Esophagus muscularis mucosa (tissue), 4 donors: ENCODE measurements at regions of chr10 and their contacts with region 1.

Region 1: GRCh38 chr10:95363303-95363912 is 72.6 kb upstream of the PDLIM1 start:
- DNase-seq: no peak
- H3K4me3 ChIP-seq: no peak overlapping the region
- H3K27ac ChIP-seq: peak overlapping the region; percentile 7 to 70 (median 44)
- H3K4me1 ChIP-seq: peaks cover 37 to 95% (median 93%) of the 10 kb centered on the region in 4 donors
- H3K27me3 ChIP-seq: no peaks in the 10 kb centered on the region
- CTCF ChIP-seq: peak; percentile 77 to 84 (median 83)
- EP300 ChIP-seq: no peak
- POLR2A ChIP-seq: no peak

Region 2: DNA sequence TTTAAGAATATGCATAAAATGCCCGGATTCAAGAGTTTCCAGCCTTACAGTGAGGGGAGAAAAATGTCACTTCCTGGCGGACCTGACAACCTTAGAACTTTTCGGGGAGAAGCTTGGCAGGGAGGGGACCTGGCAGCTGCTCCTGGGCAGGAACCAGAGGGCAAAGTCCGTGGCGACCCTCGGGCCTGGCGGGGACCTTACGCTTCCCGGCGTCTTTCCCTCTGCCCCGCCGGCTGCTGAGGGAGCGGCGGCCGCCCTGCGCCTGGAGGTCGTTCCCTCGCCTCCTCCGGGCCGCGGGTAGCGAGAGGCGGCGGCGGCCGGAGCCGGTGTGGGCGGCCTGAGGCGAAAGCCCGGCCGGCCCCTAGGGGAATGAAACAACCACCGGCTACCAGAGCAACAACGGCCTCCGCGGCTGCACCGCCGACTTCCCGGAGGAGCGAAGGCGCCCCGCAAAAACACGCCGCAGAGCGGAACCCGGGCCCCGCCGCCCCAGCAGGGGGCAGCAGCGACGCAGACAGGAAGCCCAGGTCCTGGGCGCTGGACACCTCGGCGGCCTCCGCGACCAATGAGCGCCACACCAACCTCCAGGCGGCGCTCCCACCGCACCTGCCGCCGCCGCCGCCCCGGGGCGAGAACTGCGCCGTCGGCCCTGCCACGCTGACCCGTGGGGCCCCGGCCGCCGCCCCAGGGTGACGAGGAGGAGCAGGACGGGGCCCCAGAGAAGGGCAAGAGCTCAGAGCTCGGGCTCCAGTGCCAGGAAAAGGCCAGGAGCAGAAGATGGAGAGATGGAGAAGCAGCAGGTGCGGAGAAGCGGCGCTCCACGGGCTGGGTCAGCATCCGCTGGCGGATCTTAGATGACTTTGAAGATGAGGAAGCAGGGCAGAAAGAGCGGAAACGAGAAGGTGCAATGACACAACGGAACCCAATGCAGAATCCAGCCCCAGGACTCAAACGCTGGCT is 179.9 kb before region 1 on chr10:
- intact Hi-C with region 1: loop called (anchors 10 kb)
- DNase-seq: no peak
- H3K4me3 ChIP-seq: peak overlapping the region; percentile 64 to 71 (median 68)
- H3K27ac ChIP-seq: peak overlapping the region; percentile 74 to 86 (median 84)
- H3K4me1 ChIP-seq: peaks cover 0 to 14% (median 9%) of the 10 kb centered on the region in 4 donors
- H3K27me3 ChIP-seq: no peaks in the 10 kb centered on the region
- CTCF ChIP-seq: peak; percentile 89 to 98 (median 92)
- EP300 ChIP-seq: no peak
- POLR2A ChIP-seq: no peak

Region 3: DNA sequence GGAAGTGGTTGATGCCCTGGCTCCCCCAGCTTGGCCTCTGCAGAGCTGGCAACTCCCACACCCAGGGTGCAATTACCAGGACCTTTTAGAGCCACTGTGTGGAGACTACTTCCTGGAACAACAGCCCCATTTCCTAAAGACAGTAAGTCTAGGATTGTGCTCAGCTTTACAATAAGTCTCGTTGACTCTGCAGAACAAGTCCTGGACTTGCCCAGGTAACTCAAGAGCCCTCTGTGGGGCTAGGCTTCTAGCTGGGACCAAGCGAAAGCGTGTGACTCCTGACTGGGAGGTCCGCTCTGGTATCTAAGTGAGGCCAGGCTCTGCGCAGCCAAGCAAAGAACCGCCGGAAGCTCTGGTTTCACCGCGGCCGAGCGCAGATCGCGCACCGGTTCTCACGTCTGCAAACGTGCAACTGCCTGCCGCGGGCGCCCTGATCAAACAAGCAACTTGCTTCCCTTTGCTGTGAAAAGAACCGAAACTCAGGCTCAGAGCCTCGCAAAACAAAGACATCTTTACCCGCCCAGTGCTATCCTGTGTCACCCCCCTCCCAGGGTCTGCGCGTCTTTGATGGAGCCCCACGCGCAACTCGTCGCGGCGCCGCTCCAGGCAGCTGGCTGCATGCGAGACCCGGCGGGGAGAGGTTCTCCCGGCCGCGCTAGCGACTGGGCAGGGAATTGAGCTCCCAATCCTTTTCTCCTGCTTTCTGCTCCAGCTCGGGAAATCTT is 68.2 kb before region 1 on chr10:
- intact Hi-C with region 1: no loop called
- DNase-seq: no peak
- H3K4me3 ChIP-seq: peak overlapping the region; percentile 35 to 53 (median 42)
- H3K27ac ChIP-seq: no peak overlapping the region
- H3K4me1 ChIP-seq: peaks cover 17 to 24% (median 21%) of the 10 kb centered on the region in 4 donors
- H3K27me3 ChIP-seq: peaks cover 0 to 4% (median under 1%) of the 10 kb centered on the region in 4 donors
- CTCF ChIP-seq: no peak
- EP300 ChIP-seq: no peak
- POLR2A ChIP-seq: no peak

Region 4: DNA sequence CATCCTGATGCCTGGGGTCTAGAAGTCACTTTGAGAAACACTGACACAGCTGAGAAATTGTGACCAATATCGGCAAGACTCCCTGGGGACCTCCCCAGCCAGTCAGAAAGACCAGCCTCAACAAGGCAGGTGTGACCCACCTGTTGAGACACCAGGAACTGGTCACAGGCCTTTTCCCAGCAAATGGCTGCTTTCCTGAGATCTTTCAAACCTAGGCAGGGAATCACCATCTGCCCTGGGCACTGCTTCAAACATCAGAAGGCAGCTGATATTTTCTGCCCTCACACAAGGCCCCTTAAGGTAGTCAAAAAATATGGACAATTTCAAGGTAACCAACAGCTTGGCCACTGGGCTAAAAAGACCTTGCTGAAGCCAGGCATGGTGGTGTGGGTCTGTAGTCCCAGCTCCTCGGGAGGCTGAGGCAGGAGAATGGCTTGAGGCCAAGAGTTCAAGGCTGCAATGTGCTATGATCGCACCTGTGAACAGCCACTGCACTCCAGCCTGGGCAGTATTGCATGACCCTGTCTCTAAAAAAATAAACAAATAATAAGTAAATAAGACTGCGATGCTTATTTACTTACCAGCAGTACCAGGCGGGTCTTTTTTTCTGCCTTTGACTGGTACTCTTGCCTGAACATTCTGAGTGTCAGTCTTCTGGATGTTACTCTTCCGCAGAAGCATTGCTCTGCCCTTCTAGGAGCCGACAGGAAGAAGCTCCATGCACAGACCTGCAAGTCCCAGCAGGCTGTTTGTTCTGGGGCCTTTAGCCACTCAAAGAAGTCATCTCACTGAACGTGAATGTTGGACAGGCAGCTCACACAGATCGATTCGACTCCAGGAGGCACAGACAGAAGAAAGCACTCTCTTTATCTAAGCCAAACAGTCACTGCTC is 138.0 kb after region 1 on chr10:
- intact Hi-C with region 1: no loop called
- DNase-seq: no peak
- H3K4me3 ChIP-seq: peak overlapping the region; percentile 29 to 51 (median 43)
- H3K27ac ChIP-seq: peak overlapping the region; percentile 91 to 97 (median 96)
- H3K4me1 ChIP-seq: peaks cover 75 to 99% (median 92%) of the 10 kb centered on the region in 4 donors
- H3K27me3 ChIP-seq: no peaks in the 10 kb centered on the region
- CTCF ChIP-seq: no peak
- EP300 ChIP-seq: no peak
- POLR2A ChIP-seq: no peak

Region 5: GRCh38 chr10:95517536-95518454 is 154.4 kb after region 1 on chr10:
- intact Hi-C with region 1: no loop called
- DNase-seq: no peak
- H3K4me3 ChIP-seq: peak overlapping the region in 2 of 4 donors; percentile 20 to 23
- H3K27ac ChIP-seq: peak overlapping the region; percentile 91 to 97 (median 96)
- H3K4me1 ChIP-seq: peaks cover 75 to 99% (median 96%) of the 10 kb centered on the region in 4 donors
- H3K27me3 ChIP-seq: no peaks in the 10 kb centered on the region
- CTCF ChIP-seq: no peak
- EP300 ChIP-seq: no peak
- POLR2A ChIP-seq: no peak

Region 6: GRCh38 chr10:96244354-96244753 is 880.9 kb after region 1 on chr10:
- intact Hi-C with region 1: no loop called
- DNase-seq: no peak
- H3K4me3 ChIP-seq: no peak overlapping the region
- H3K27ac ChIP-seq: no peak overlapping the region
- H3K4me1 ChIP-seq: no peaks in the 10 kb centered on the region
- H3K27me3 ChIP-seq: no peaks in the 10 kb centered on the region
- CTCF ChIP-seq: no peak
- EP300 ChIP-seq: no peak
- POLR2A ChIP-seq: no peak